H1 (cell line): ENCODE measurements at regions of chr18 and their contacts with region 1.

Region 1: GRCh38 chr18:3062798-3063680 is 50.1 kb upstream of the LPIN2 start:
- DNase-seq: peak in 1 of 2 experiments; percentile 83
- H3K4me3 ChIP-seq: no peak overlapping the region
- H3K27ac ChIP-seq: no peak overlapping the region
- H3K4me1 ChIP-seq: no peaks in the 10 kb centered on the region
- H3K27me3 ChIP-seq: no peaks in the 10 kb centered on the region
- CTCF ChIP-seq: peak; percentile 73 to 83 (median 82)
- EP300 ChIP-seq: no peak
- POLR2A ChIP-seq: no peak
- RAD21 ChIP-seq: peak; percentile 64 to 79

Region 2: DNA sequence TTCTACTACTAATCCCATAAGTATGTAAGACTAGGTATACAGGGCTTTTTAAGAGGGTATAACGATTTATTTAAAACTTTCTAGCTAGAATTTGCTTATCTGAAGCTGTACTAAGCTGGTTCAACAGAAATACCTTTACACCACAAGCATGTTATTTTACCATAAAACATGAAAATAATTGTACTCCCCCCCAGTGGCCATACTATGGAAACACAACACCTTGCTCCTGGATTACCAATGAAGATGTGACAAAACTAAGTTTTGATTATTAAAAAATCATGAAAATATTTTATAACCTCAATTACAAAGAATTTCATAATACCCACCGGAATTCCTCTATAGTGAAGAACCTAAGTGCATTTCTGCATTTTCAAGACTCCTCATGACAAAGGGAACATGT is 77.4 kb before region 1 on chr18:
- CTCF ChIA-PET with region 1: interaction called, 10 read pairs
- POLR2A ChIA-PET with region 1: no interaction called
- DNase-seq: no peak
- H3K4me3 ChIP-seq: no peak overlapping the region
- H3K27ac ChIP-seq: no peak overlapping the region
- H3K4me1 ChIP-seq: peaks cover 0 to 11% (median 9%) of the 10 kb centered on the region in 4 experiments; a peak in 6 of 7 replicates
- H3K27me3 ChIP-seq: no peaks in the 10 kb centered on the region
- CTCF ChIP-seq: peak in 1 of 3 experiments; percentile 44; a peak in 2 of 4 replicates
- EP300 ChIP-seq: no peak
- POLR2A ChIP-seq: no peak
- RAD21 ChIP-seq: peak; percentile 8 to 14; a peak in 1 of 4 replicates

Region 3: GRCh38 chr18:3051718-3052410 is 11.2 kb before region 1 on chr18:
- CTCF ChIA-PET with region 1: interaction called, 14 read pairs
- POLR2A ChIA-PET with region 1: no interaction called
- DNase-seq: no peak
- H3K4me3 ChIP-seq: no peak overlapping the region
- H3K27ac ChIP-seq: no peak overlapping the region
- H3K4me1 ChIP-seq: no peaks in the 10 kb centered on the region
- H3K27me3 ChIP-seq: no peaks in the 10 kb centered on the region
- CTCF ChIP-seq: no peak
- EP300 ChIP-seq: no peak
- POLR2A ChIP-seq: no peak
- RAD21 ChIP-seq: no peak

Region 4: GRCh38 chr18:3083766-3084165 is 20.7 kb after region 1 on chr18:
- CTCF ChIA-PET with region 1: interaction called, 12 read pairs
- POLR2A ChIA-PET with region 1: no interaction called
- DNase-seq: no peak
- H3K4me3 ChIP-seq: no peak overlapping the region
- H3K27ac ChIP-seq: no peak overlapping the region
- H3K4me1 ChIP-seq: peaks cover 0 to 8% (median 2%) of the 10 kb centered on the region in 4 experiments; a peak in 2 of 7 replicates
- H3K27me3 ChIP-seq: no peaks in the 10 kb centered on the region; a peak in 1 of 7 replicates
- CTCF ChIP-seq: no peak
- EP300 ChIP-seq: no peak
- POLR2A ChIP-seq: no peak
- RAD21 ChIP-seq: no peak

Region 5: DNA sequence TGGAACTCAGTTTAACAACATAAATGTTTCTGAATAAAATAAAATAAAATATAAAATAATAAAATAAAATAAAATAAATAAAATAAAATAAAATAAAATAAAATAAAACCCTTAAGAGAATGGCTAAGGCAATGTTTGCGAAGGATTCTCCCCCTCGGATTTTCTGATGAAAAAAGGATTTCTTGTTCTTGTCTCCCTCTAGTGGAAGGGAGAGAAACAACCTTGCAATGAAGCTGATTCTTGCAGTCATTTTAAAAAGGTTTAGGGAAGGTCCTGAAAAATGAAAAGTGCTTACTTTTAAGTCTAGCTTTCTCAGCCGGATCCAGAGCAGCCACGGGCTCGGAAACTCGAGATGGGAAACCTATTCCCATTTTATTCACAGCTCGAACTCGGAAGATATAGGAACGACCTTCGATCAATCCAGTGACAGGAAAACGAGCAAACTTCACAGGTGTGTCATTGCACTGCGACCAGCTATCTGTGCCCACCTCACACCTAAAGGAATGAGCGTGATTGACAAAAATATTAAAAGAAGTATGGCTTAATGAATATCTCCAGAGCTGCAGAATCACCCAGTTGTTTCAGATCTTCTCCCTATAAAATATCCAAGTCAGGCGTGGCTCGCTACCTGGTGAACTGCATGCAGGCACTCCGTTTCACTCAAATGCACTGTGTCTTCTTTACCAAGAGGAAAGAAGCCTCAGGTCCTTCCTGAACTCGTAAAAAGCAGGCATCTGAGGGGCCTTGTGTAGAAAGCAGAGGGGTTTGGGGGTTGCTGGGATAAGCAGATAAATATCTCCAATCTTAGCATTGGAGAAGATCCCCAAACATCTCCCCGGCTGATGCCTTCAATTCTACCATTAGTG is 88.6 kb after region 1 on chr18:
- CTCF ChIA-PET with region 1: interaction called, 14 read pairs
- POLR2A ChIA-PET with region 1: no interaction called
- DNase-seq: no peak
- H3K4me3 ChIP-seq: no peak overlapping the region
- H3K27ac ChIP-seq: no peak overlapping the region
- H3K4me1 ChIP-seq: no peaks in the 10 kb centered on the region
- H3K27me3 ChIP-seq: no peaks in the 10 kb centered on the region; a peak in 1 of 7 replicates
- CTCF ChIP-seq: peak in 2 of 3 experiments; percentile 52 to 70; a peak in 2 of 4 replicates
- EP300 ChIP-seq: no peak
- POLR2A ChIP-seq: no peak
- RAD21 ChIP-seq: peak; percentile 69 to 71